Activated CD4-positive, alpha-beta T cell treated with anti-CD3 and anti-CD28 coated beads for 36 hours (primary cell): ENCODE measurements at regions of chr12 and their contacts with region 1.

Region 1: DNA sequence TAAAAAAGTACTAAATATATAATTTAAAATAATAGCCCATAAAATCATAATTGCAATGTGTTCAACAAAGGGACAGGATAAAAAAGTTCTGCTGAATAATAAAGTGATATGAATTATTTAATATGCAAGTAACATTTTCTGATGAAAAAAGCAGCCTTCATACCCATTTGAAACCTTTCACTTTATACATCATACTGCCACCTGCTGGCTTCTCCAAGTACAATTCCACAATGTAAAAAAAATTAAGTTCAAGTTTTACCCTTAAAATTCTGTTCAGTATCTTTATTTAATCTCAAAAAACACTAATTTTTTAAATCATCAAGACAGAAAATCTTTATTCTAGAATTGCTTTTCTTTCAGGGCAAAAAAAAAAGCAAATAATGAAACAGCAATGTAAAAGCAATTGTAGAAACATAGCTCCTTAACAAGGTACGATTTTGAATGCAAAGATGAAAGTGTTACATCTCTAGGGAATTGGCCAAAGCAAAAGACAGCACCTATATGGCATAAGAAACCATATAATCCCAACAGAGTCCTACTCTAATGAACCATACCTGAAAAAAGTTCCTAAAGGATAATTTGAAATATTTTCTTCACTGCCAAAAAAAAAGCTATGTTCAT is 15.0 kb downstream of the MDM1 start:
- DNase-seq: peak; percentile 64
- ATAC-seq: no peak
- H3K4me3 Mint-ChIP-seq: no peak overlapping the region
- H3K27ac Mint-ChIP-seq: no peak overlapping the region
- H3K4me1 Mint-ChIP-seq: no peaks in the 10 kb centered on the region
- H3K27me3 Mint-ChIP-seq: no peaks in the 10 kb centered on the region

Region 2: GRCh38 chr12:68001486-68002466 is 315.4 kb before region 1 on chr12:
- CTCF ChIA-PET with region 1: no interaction called
- POLR2A ChIA-PET with region 1: no interaction called
- intact Hi-C with region 1: loop called in 1 of 2 experiments (anchors 5 kb)
- DNase-seq: no peak
- ATAC-seq: no peak
- H3K4me3 Mint-ChIP-seq: no peak overlapping the region
- H3K27ac Mint-ChIP-seq: no peak overlapping the region
- H3K4me1 Mint-ChIP-seq: peaks cover 7% of the 10 kb centered on the region
- H3K27me3 Mint-ChIP-seq: no peaks in the 10 kb centered on the region

Region 3: DNA sequence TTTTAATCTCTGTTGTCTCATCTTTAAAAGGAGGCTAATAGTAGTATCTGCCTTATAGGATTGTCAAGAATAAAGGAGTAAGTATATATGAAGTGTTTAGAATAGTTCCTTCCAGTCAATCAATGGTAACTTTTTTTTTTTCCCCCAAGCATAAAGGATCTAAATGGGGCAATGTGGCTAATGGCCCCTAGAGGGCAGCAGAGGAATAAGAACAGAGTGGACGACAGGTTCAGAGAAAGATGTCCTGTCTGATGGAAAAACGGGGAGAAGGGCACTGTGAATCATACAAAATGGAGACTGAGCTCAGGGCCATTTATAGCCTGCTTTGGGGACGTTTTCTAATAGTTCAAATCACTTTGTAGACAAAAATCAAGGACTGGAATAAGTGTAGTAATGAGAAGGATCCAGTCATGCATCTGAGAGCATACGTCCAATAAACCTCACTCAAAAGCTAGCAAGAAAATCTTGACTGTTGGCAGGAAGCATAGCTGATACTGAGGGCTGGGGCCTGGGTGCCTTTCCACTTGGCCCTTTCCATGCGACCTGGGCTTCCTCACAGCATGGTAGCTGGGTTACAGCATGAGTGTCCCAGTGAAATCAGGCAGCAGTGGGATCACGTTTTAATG is 276.6 kb before region 1 on chr12:
- CTCF ChIA-PET with region 1: interaction called, 6 read pairs
- POLR2A ChIA-PET with region 1: no interaction called
- intact Hi-C with region 1: loop called (anchors 1 to 2 kb)
- DNase-seq: peak; percentile 76
- ATAC-seq: peak; percentile 69
- H3K4me3 Mint-ChIP-seq: no peak overlapping the region
- H3K27ac Mint-ChIP-seq: no peak overlapping the region
- H3K4me1 Mint-ChIP-seq: peaks cover 34% of the 10 kb centered on the region
- H3K27me3 Mint-ChIP-seq: no peaks in the 10 kb centered on the region

Region 4: DNA sequence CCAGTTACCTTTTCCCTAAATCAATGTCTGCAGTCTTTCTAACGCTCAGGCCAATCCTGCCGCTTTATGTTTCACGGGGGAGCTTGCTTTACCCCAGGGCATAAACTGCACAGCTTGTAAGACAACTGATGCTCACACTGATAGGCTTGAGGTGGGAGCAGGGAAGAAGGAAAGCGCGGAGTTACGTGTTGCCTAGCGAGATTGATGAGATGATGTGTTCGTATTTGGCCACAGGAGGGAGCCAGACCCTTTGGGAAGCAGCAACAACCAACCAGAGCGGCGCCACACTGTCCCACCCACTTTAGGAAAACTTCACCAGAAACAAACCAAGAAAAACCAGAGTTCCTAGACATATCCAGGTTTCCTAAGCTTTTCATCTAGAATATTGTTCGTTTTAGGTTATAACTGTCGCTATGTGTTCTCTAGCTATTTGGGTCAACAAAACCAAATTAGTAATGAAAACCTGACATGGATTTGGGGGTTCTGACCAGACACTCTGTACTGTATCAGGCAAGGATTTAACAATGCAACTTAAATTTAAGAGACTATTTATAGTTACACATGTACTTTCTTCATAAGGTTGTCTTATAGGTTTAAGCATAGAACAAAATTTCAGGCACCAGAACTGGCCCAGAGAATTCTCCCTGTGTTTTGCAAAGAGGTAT is 93.9 kb before region 1 on chr12:
- CTCF ChIA-PET with region 1: interaction called, 143 read pairs
- POLR2A ChIA-PET with region 1: no interaction called
- intact Hi-C with region 1: loop called (anchors 1 kb)
- DNase-seq: peak; percentile 85
- ATAC-seq: peak; percentile 95
- H3K4me3 Mint-ChIP-seq: no peak overlapping the region
- H3K27ac Mint-ChIP-seq: no peak overlapping the region
- H3K4me1 Mint-ChIP-seq: peaks cover 10% of the 10 kb centered on the region
- H3K27me3 Mint-ChIP-seq: peaks cover 13% of the 10 kb centered on the region

Region 5: DNA sequence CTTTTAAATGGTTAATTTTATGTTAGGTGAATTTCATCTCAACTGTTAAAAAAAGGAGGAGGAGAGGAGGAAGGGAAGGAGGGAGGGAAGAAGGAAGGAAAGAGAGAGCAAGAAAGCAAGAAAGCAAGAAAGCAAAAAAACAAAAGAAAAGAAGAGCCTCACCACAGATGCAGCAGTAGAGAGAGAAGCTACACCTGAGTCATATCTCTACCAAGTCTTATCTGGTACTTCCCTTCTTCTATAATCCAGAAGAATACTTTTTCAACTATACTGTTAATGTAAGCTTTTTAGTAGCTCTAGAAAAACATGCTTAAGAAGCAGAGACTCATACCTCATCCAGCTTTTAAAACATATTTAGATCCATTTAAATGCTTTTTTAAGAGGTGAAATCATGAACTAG is 85.9 kb before region 1 on chr12:
- CTCF ChIA-PET with region 1: interaction called, 143 read pairs
- POLR2A ChIA-PET with region 1: no interaction called
- intact Hi-C with region 1: no loop called
- DNase-seq: no peak
- ATAC-seq: peak; percentile 69
- H3K4me3 Mint-ChIP-seq: no peak overlapping the region
- H3K27ac Mint-ChIP-seq: no peak overlapping the region
- H3K4me1 Mint-ChIP-seq: peaks cover 17% of the 10 kb centered on the region
- H3K27me3 Mint-ChIP-seq: peaks cover 6% of the 10 kb centered on the region

Region 6: GRCh38 chr12:68240597-68241374 is 76.4 kb before region 1 on chr12:
- CTCF ChIA-PET with region 1: interaction called, 11 read pairs
- POLR2A ChIA-PET with region 1: no interaction called
- intact Hi-C with region 1: no loop called
- DNase-seq: peak; percentile 73
- ATAC-seq: peak; percentile 97
- H3K4me3 Mint-ChIP-seq: peak overlapping the region; percentile 4
- H3K27ac Mint-ChIP-seq: peak overlapping the region; percentile 27
- H3K4me1 Mint-ChIP-seq: peaks cover 48% of the 10 kb centered on the region
- H3K27me3 Mint-ChIP-seq: peaks cover 2% of the 10 kb centered on the region

Region 7: GRCh38 chr12:68331869-68332727 is 14.9 kb after region 1 on chr12 and contains the start of gene MDM1:
- CTCF ChIA-PET with region 1: interaction called, 25 read pairs
- POLR2A ChIA-PET with region 1: no interaction called
- intact Hi-C with region 1: no loop called
- DNase-seq: peak; percentile 97
- ATAC-seq: peak; percentile 98
- H3K4me3 Mint-ChIP-seq: peak within 1 kb of the TSS; percentile 80
- H3K27ac Mint-ChIP-seq: peak within 1 kb of the TSS; percentile 55
- H3K4me1 Mint-ChIP-seq: peaks cover 42% of the 10 kb centered on the region
- H3K27me3 Mint-ChIP-seq: peaks cover 2% of the 10 kb centered on the region
- total RNA-seq, gene MDM1: 12.7 to 13.6 TPM